HEK293 (cell line): ENCODE measurements at regions of chr2 and their contacts with region 1.

Region 1: DNA sequence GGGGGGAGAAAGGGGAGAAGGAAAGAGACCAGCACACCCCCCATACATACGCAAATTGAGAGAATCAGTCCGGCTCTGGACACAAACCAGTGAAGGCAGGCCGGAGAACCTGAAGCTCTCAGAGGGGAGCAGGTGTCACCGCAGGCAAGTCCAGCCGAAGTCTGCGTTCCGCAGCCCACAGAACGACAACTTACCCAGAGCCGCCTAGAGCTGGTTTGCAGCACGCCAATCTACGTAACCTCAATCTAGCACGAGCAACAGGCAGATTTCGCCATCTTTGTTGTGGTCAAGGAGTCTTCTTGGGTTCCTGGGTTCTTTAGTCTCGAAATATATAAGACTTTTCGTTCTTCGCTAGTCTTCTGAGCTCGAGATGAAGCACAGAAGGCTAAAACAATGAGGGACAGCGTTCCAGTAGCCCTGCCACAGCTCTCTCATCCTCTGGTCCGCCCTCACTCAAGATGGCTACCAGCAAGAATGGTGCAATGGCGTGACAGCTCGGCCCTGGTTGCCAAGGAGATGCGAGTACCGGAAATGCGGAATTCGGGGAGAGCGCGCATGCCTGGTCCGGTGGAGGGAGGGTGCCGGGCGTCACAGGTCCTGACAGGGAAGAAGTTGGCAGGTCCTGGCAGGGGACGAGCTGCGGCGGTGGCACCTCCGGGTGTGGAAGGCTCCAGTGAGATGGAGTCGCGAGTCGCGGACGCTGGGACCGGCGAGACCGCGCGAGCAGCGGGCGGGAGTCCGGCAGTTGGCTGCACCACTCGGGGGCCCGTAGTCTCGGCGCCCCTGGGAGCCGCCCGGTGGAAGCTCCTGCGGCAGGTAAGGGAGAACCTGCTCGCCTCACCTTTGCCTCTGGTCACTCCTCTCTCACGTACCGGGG is at the starts of genes CAMKMT and PREPL:
- H3K4me3 ChIP-seq: peak within 1 kb of the TSS; percentile 68
- H3K27ac ChIP-seq: peak within 1 kb of the TSS; percentile 97
- H3K4me1 ChIP-seq: peaks cover 6% of the 10 kb centered on the region; the same call in 1 of the 2 replicates
- CTCF ChIP-seq: no peak

Region 2: GRCh38 chr2:44167940-44168680 is 193.5 kb before region 1 on chr2:
- CTCF ChIA-PET with region 1: no interaction called
- POLR2A ChIA-PET with region 1: interaction called, 12 read pairs
- H3K4me3 ChIP-seq: peak overlapping the region; percentile 58
- H3K27ac ChIP-seq: peak overlapping the region; percentile 79
- H3K4me1 ChIP-seq: peaks cover 2% of the 10 kb centered on the region; the same call in 1 of the 2 replicates
- CTCF ChIP-seq: no peak

Region 3: DNA sequence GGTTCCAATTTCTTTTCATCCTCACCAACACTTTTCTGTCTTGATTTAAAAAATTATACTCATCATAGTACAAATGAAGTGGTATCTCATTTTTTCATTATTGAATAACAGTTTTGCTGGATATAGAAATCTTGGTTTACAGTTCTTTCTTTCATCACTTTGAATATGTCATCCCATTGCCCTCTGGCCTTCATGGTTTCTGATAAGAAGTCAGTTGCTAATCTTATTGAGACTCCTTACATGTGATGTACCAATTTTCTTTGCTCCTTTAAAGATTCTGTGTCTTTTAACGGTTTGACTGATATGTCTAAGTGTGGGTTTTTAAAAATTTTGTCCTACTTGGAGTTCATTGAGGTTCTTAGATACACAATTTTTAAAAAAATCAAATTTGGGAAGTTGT is 51.3 kb before region 1 on chr2:
- CTCF ChIA-PET with region 1: no interaction called
- POLR2A ChIA-PET with region 1: no interaction called
- H3K4me3 ChIP-seq: no peak overlapping the region
- H3K27ac ChIP-seq: no peak overlapping the region
- H3K4me1 ChIP-seq: no peaks in the 10 kb centered on the region
- CTCF ChIP-seq: no peak

Region 4: DNA sequence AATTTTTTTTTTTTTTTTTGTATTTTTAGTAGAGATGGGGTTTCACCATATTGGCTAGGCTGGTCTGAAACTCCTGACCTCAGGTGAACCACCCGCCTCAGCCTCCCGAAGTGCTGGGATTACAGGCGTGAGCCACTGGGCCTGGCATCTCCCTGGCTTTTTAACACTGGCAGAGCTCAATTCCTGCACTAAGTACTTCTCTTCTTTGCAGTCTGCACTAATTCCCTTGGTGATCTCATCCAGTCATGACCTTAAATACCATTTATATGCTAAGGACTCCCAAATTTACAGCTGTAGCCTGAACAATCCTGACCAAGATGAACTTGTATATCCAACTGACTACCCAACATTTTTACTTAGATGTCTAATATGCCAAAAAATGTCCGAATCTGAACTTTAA is 10.5 kb before region 1 on chr2:
- CTCF ChIA-PET with region 1: interaction called, 5 read pairs
- POLR2A ChIA-PET with region 1: interaction called, 19 read pairs
- H3K4me3 ChIP-seq: no peak overlapping the region
- H3K27ac ChIP-seq: no peak overlapping the region
- H3K4me1 ChIP-seq: no peaks in the 10 kb centered on the region
- CTCF ChIP-seq: no peak